Activated CD8-positive, alpha-beta T cell treated with anti-CD3 and anti-CD28 coated beads for 36 hours (primary cell): ENCODE measurements at regions of chr7 and their contacts with region 1.

Region 1: GRCh38 chr7:33932832-33933468 is 27.6 kb downstream of the BMPER start:
- DNase-seq: peak; percentile 70
- ATAC-seq: peak; percentile 56
- H3K4me3 Mint-ChIP-seq: no peak overlapping the region
- H3K27ac Mint-ChIP-seq: no peak overlapping the region
- H3K4me1 Mint-ChIP-seq: peaks cover 4% of the 10 kb centered on the region
- H3K27me3 Mint-ChIP-seq: peaks cover 12% of the 10 kb centered on the region
- CTCF ChIP-seq: peak; percentile 89

Region 2: GRCh38 chr7:33185786-33186185 is 747.2 kb before region 1 on chr7:
- CTCF ChIA-PET with region 1: interaction called, 27 read pairs
- POLR2A ChIA-PET with region 1: no interaction called
- intact Hi-C with region 1: loop called (anchors 5 kb)
- DNase-seq: peak; percentile 11
- ATAC-seq: peak; percentile 62
- H3K4me3 Mint-ChIP-seq: no peak overlapping the region
- H3K27ac Mint-ChIP-seq: no peak overlapping the region
- H3K4me1 Mint-ChIP-seq: peaks cover 5% of the 10 kb centered on the region
- H3K27me3 Mint-ChIP-seq: no peaks in the 10 kb centered on the region
- CTCF ChIP-seq: peak; percentile 73

Region 3: GRCh38 chr7:33243319-33243881 is 689.5 kb before region 1 on chr7:
- CTCF ChIA-PET with region 1: interaction called, 18 read pairs
- POLR2A ChIA-PET with region 1: no interaction called
- intact Hi-C with region 1: loop called (anchors 10 kb)
- DNase-seq: no peak
- ATAC-seq: no peak
- H3K4me3 Mint-ChIP-seq: no peak overlapping the region
- H3K27ac Mint-ChIP-seq: no peak overlapping the region
- H3K4me1 Mint-ChIP-seq: no peaks in the 10 kb centered on the region
- H3K27me3 Mint-ChIP-seq: no peaks in the 10 kb centered on the region
- CTCF ChIP-seq: peak; percentile 55

Region 4: DNA sequence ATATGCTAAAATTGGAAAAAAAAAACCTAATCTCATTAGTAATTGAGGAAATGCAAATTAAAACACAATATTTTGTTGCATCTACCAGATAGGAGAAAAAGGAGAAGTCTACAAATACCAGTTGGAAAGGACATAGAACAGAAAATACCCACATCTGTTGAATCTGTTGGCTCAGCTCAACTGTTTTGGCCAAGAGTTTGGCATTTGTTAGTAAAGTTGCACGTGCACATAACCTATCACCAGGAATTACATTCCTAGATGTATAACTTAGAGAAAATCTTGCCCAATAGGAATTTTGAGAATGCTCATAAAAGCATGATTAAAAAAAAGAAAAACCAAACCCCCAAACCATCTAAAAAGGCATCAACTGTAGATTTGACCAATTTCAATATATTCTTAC is 309.7 kb before region 1 on chr7:
- CTCF ChIA-PET with region 1: no interaction called
- POLR2A ChIA-PET with region 1: no interaction called
- intact Hi-C with region 1: no loop called
- DNase-seq: no peak
- ATAC-seq: no peak
- H3K4me3 Mint-ChIP-seq: no peak overlapping the region
- H3K27ac Mint-ChIP-seq: no peak overlapping the region
- H3K4me1 Mint-ChIP-seq: no peaks in the 10 kb centered on the region
- H3K27me3 Mint-ChIP-seq: no peaks in the 10 kb centered on the region
- CTCF ChIP-seq: no peak

Region 5: DNA sequence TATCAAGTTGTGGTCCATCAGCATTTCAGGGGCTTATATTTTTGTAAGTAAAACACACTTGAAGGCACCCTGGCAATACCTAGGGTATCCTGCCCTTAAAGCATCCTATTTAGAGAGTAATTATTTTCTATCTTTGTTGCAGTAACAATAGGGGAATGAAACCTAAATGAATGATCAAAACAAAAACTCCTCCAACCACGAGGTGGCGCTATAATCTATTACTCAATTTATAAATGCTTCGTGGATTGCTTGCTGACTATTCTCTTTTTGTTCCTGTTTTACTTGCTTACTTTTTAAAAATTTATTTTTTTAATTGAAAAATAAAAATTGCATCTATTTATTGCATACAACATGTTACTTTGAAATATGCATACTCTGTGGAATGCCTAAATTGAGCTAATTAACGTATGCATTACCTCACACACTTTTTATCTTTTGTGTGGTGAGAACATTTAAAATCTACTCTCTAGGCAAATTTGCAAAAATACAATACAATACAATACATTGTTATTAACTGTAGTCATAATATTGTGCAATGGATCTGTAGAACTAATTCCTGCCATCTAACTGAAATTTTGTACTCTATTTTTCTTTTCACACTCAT is 175.3 kb before region 1 on chr7:
- CTCF ChIA-PET with region 1: interaction called, 14 read pairs
- POLR2A ChIA-PET with region 1: no interaction called
- intact Hi-C with region 1: no loop called
- DNase-seq: peak; percentile 57
- ATAC-seq: no peak
- H3K4me3 Mint-ChIP-seq: no peak overlapping the region
- H3K27ac Mint-ChIP-seq: no peak overlapping the region
- H3K4me1 Mint-ChIP-seq: no peaks in the 10 kb centered on the region
- H3K27me3 Mint-ChIP-seq: no peaks in the 10 kb centered on the region
- CTCF ChIP-seq: peak; percentile 75

Region 6: GRCh38 chr7:33895025-33895804 is 37.7 kb before region 1 on chr7:
- CTCF ChIA-PET with region 1: interaction called, 29 read pairs
- POLR2A ChIA-PET with region 1: no interaction called
- intact Hi-C with region 1: no loop called
- DNase-seq: peak; percentile 88
- ATAC-seq: peak; percentile 99
- H3K4me3 Mint-ChIP-seq: no peak overlapping the region
- H3K27ac Mint-ChIP-seq: no peak overlapping the region
- H3K4me1 Mint-ChIP-seq: peaks cover 8% of the 10 kb centered on the region
- H3K27me3 Mint-ChIP-seq: peaks cover 39% of the 10 kb centered on the region
- CTCF ChIP-seq: peak; percentile 87

Region 7: GRCh38 chr7:33921216-33921938 is 11.6 kb before region 1 on chr7:
- CTCF ChIA-PET with region 1: interaction called, 35 read pairs
- POLR2A ChIA-PET with region 1: interaction called, 3 read pairs
- intact Hi-C with region 1: no loop called
- DNase-seq: no peak
- ATAC-seq: no peak
- H3K4me3 Mint-ChIP-seq: no peak overlapping the region
- H3K27ac Mint-ChIP-seq: no peak overlapping the region
- H3K4me1 Mint-ChIP-seq: no peaks in the 10 kb centered on the region
- H3K27me3 Mint-ChIP-seq: peaks cover 5% of the 10 kb centered on the region
- CTCF ChIP-seq: no peak

Region 8: DNA sequence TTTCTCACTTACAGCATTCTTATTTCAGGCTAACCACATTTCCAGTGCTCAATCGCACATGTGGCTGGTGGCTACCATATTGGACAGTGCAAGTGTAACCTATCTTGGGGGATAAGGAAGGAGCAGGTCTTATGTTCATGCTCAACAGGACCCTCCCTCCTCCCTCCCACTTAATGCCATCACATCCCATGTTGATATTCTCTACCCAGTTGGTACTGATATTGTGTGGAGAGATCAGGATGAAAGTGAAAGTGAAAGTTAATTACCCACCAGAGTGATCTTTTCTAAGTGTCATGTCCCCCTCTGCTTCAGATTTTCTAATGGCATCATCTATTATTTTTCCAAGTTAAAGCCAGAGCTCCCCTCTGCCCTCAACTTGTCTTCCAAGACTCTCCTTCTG is 63.9 kb after region 1 on chr7:
- CTCF ChIA-PET with region 1: no interaction called
- POLR2A ChIA-PET with region 1: no interaction called
- intact Hi-C with region 1: no loop called
- DNase-seq: no peak
- ATAC-seq: no peak
- H3K4me3 Mint-ChIP-seq: no peak overlapping the region
- H3K27ac Mint-ChIP-seq: no peak overlapping the region
- H3K4me1 Mint-ChIP-seq: peaks cover 4% of the 10 kb centered on the region
- H3K27me3 Mint-ChIP-seq: no peaks in the 10 kb centered on the region
- CTCF ChIP-seq: no peak

Region 9: DNA sequence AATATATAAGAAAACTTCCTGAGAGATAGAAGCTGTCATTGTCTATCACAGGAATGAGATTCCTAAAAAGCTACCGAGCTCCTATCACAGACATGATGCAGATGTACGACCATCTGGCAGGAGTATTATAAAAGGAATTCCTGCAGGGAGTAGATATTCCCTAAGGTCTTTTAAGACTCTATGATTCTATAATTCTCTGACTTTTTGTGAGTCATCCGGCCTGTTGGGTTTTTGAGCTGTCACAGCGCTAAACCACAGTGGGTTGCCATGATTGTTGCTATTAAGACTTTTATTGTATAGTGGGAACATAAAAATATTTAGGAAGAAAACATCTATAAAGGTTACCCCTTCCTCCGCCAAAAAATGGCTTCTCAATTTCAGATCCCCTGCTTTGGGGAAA is 195.8 kb after region 1 on chr7:
- CTCF ChIA-PET with region 1: no interaction called
- POLR2A ChIA-PET with region 1: no interaction called
- intact Hi-C with region 1: no loop called
- DNase-seq: no peak
- ATAC-seq: no peak
- H3K4me3 Mint-ChIP-seq: no peak overlapping the region
- H3K27ac Mint-ChIP-seq: no peak overlapping the region
- H3K4me1 Mint-ChIP-seq: no peaks in the 10 kb centered on the region
- H3K27me3 Mint-ChIP-seq: no peaks in the 10 kb centered on the region
- CTCF ChIP-seq: no peak

Region 10: GRCh38 chr7:34523226-34523918 is 590.4 kb after region 1 on chr7:
- CTCF ChIA-PET with region 1: no interaction called
- POLR2A ChIA-PET with region 1: no interaction called
- intact Hi-C with region 1: no loop called
- DNase-seq: no peak
- ATAC-seq: no peak
- H3K4me3 Mint-ChIP-seq: no peak overlapping the region
- H3K27ac Mint-ChIP-seq: no peak overlapping the region
- H3K4me1 Mint-ChIP-seq: no peaks in the 10 kb centered on the region
- H3K27me3 Mint-ChIP-seq: no peaks in the 10 kb centered on the region
- CTCF ChIP-seq: no peak